ENCODE measurements at regions of chr11 and their contacts with region 1.

Region 1: GRCh38 chr11:65497141-65498041 is 1.5 kb upstream of the MALAT1 start:
- DNase-seq: peak; percentile 99
- H3K4me3 ChIP-seq: peak overlapping the region; percentile 0 to 91 (median 48)
- H3K27ac ChIP-seq: peak overlapping the region; percentile 95
- H3K4me1 ChIP-seq: peaks cover 45% of the 10 kb centered on the region
- H3K27me3 ChIP-seq: no peaks in the 10 kb centered on the region
- CTCF ChIP-seq: no peak
- POLR2A ChIP-seq: peak; percentile 98

Region 2: GRCh38 chr11:65448418-65449105 is 48.8 kb before region 1 on chr11:
- CTCF ChIA-PET with region 1: interaction called, 11 read pairs
- POLR2A ChIA-PET with region 1: interaction called, 70 read pairs
- dilution Hi-C with region 1: no loop called
- intact Hi-C with region 1: no loop called
- DNase-seq: peak; percentile 37
- H3K4me3 ChIP-seq: no peak overlapping the region
- H3K27ac ChIP-seq: no peak overlapping the region
- H3K4me1 ChIP-seq: no peaks in the 10 kb centered on the region
- H3K27me3 ChIP-seq: no peaks in the 10 kb centered on the region
- CTCF ChIP-seq: no peak
- POLR2A ChIP-seq: peak; percentile 56

Region 3: GRCh38 chr11:65454696-65455456 is 42.5 kb before region 1 on chr11:
- CTCF ChIA-PET with region 1: no interaction called
- POLR2A ChIA-PET with region 1: interaction called, 70 read pairs
- dilution Hi-C with region 1: no loop called
- intact Hi-C with region 1: loop called (anchors 5 kb)
- DNase-seq: peak; percentile 93
- H3K4me3 ChIP-seq: peak overlapping the region; percentile 27 to 60 (median 53)
- H3K27ac ChIP-seq: peak overlapping the region; percentile 51
- H3K4me1 ChIP-seq: no peaks in the 10 kb centered on the region
- H3K27me3 ChIP-seq: no peaks in the 10 kb centered on the region
- CTCF ChIP-seq: peak in 1 of 2 donors; percentile 37
- POLR2A ChIP-seq: peak; percentile 94

Region 4: GRCh38 chr11:65471410-65471762 is 26.0 kb before region 1 on chr11:
- CTCF ChIA-PET with region 1: interaction called, 247 read pairs
- POLR2A ChIA-PET with region 1: interaction called, 283 read pairs
- dilution Hi-C with region 1: no loop called
- intact Hi-C with region 1: loop called (anchors 1 kb)
- DNase-seq: peak; percentile 83
- H3K4me3 ChIP-seq: no peak overlapping the region
- H3K27ac ChIP-seq: peak overlapping the region; percentile 89
- H3K4me1 ChIP-seq: peaks cover 19% of the 10 kb centered on the region
- H3K27me3 ChIP-seq: no peaks in the 10 kb centered on the region
- CTCF ChIP-seq: peak; percentile 70 to 78
- POLR2A ChIP-seq: no peak

Region 5: DNA sequence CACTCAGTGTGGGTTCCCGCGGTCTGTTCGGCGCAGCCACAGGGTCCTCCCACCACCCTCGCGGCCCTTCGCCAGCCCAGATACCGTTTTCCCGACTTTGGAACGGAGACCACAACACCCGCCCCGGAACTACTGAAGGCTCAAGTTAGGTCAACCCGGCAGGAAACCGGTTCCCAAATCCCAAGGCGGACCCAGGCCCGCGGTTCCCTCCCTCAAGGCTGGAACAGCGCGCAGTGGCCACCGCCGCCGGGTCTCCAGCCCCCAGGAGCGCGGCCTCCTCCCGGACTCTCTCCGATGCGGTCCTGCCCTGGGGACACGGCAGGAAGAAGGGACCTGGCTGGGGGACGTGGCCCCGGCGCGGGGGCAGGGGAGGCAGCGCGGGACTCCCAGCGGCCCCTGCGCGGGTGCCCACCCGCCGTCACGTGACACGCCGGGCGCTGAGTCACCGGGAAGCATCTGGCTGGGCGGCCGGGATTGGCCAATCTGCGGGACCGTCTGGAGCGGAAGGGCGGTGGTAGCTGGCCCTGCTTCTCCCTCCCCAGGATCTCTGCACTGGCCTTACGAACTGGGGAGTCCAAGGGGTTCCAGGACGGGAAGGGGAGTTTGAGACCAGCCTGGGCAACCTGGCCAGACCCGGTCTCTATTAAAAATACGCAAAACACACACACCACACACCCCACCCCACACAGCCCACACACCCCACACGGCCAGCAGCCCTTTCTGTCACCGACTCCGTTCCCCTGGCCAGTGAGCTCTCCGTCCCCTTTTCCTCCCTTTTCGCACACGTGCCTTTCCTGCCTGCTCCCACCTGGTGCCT is 20.0 kb before region 1 on chr11:
- CTCF ChIA-PET with region 1: interaction called, 247 read pairs
- POLR2A ChIA-PET with region 1: interaction called, 283 read pairs
- dilution Hi-C with region 1: no loop called
- intact Hi-C with region 1: loop called (anchors 1 kb)
- DNase-seq: peak; percentile 94
- H3K4me3 ChIP-seq: peak overlapping the region; percentile 35 to 56 (median 54)
- H3K27ac ChIP-seq: peak overlapping the region; percentile 88
- H3K4me1 ChIP-seq: peaks cover 26% of the 10 kb centered on the region
- H3K27me3 ChIP-seq: no peaks in the 10 kb centered on the region
- CTCF ChIP-seq: no peak
- POLR2A ChIP-seq: peak; percentile 95

Measured in endothelial cell of umbilical vein (primary cell).